ENCODE measurements at regions of chr3 and their contacts with region 1.

Region 1: DNA sequence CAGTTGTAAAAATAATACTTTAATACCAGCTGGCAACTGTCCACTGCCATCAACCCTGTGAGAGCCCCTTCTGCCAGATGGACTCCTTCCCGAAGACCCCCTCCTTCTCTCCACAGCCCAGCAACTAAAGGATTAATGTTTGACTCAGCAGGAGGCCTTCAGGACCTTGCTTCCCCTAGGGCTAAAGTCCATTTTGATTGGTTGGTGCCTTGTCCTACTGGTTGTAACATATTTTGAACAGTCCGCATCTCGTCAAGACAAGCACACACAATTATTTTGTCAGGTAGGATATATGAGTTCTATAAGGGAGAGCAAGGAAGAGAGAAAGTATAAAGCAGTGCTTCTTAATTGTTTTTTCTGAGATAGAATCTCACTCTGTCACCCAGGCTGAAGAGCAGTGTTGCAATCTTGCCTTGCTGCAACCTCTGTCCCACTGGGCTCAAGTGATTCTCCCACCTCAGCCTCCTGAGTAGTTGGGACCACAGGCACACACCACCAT is 18.6 kb downstream of the ACOX2 start:
- DNase-seq: no peak
- H3K4me3 ChIP-seq: no peak overlapping the region
- H3K27ac ChIP-seq: no peak overlapping the region
- H3K4me1 ChIP-seq: no peaks in the 10 kb centered on the region; a peak in 1 of 4 replicates
- H3K27me3 ChIP-seq: no peaks in the 10 kb centered on the region
- CTCF ChIP-seq: no peak
- EP300 ChIP-seq: no peak
- RAD21 ChIP-seq: no peak

Region 2: DNA sequence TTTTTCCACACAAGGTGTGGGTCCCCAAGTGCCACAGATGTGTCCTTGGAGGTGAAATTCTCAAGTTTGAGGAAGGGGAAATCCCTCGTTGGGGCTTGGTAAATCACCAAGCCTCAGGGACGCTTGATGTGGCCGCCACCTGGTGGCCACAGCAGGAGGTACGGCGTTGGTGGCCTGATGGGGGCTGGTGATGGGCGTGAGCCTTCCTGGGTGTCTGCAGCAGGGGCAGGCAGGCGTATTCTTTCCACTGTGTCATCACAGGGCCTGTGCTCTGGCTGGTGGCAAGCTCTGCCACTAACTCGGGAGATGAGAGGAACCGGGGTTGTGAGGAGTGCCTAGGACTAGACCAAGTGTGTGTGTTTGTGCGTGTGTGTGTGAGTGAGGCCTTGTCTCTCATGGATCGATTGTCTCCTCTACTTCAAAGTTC is 14.5 kb after region 1 on chr3:
- CTCF ChIA-PET with region 1: interaction called, 10 read pairs
- POLR2A ChIA-PET with region 1: no interaction called
- DNase-seq: peak; percentile 89
- H3K4me3 ChIP-seq: peak overlapping the region in 1 of 2 experiments; percentile 17; a peak in 1 of 4 replicates
- H3K27ac ChIP-seq: no peak overlapping the region
- H3K4me1 ChIP-seq: peaks cover 12 to 32% of the 10 kb centered on the region in 2 experiments
- H3K27me3 ChIP-seq: no peaks in the 10 kb centered on the region
- CTCF ChIP-seq: peak; percentile 90
- EP300 ChIP-seq: no peak
- RAD21 ChIP-seq: peak; percentile 92

Region 3: GRCh38 chr3:58722561-58722960 is 204.2 kb after region 1 on chr3:
- CTCF ChIA-PET with region 1: no interaction called
- POLR2A ChIA-PET with region 1: no interaction called
- DNase-seq: peak; percentile 57
- H3K4me3 ChIP-seq: no peak overlapping the region
- H3K27ac ChIP-seq: no peak overlapping the region
- H3K4me1 ChIP-seq: peaks cover 0 to 17% of the 10 kb centered on the region in 2 experiments; a peak in 2 of 4 replicates
- H3K27me3 ChIP-seq: no peaks in the 10 kb centered on the region
- CTCF ChIP-seq: no peak
- EP300 ChIP-seq: peak in 1 of 2 experiments; percentile 71; a peak in 1 of 4 replicates
- RAD21 ChIP-seq: 0 out of 2 replicates have a peak, but pooled peaks have one; percentile 7